BJ (cell line): ENCODE measurements at regions of chr16 and their contacts with region 1.

Region 1: DNA sequence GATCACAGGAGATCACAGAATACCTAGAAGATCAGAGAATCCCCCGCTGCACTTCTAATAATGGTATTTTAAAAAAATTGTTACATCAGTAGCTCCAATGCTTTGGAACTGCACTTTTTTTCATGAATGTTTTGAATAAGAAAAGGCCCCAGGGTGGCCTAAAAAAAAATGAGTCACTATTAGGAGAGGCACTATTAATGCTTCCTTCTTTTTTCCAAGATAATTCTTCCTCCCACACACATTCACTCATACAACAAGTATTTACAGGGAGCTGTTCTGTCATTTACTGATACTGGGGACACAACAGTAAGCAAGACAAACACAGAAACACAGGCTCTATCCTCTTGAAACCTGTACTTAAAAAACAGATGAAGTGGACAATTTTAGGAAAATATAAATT is 675 bp upstream of the PDZD9 start:
- DNase-seq: peak; percentile 72
- H3K4me3 ChIP-seq: no peak overlapping the region
- H3K27me3 ChIP-seq: no peaks in the 10 kb centered on the region
- CTCF ChIP-seq: no peak

Region 2: GRCh38 chr16:21937336-21937829 is 64.2 kb before region 1 on chr16:
- CTCF ChIA-PET with region 1: no interaction called
- POLR2A ChIA-PET with region 1: no interaction called
- DNase-seq: no peak
- H3K4me3 ChIP-seq: no peak overlapping the region
- H3K27me3 ChIP-seq: peaks cover 3% of the 10 kb centered on the region
- CTCF ChIP-seq: no peak

Region 3: GRCh38 chr16:21989133-21989532 is 12.5 kb before region 1 on chr16:
- CTCF ChIA-PET with region 1: interaction called, 14 read pairs
- POLR2A ChIA-PET with region 1: no interaction called
- DNase-seq: peak; percentile 19
- H3K4me3 ChIP-seq: no peak overlapping the region
- H3K27me3 ChIP-seq: no peaks in the 10 kb centered on the region
- CTCF ChIP-seq: no peak

Region 4: DNA sequence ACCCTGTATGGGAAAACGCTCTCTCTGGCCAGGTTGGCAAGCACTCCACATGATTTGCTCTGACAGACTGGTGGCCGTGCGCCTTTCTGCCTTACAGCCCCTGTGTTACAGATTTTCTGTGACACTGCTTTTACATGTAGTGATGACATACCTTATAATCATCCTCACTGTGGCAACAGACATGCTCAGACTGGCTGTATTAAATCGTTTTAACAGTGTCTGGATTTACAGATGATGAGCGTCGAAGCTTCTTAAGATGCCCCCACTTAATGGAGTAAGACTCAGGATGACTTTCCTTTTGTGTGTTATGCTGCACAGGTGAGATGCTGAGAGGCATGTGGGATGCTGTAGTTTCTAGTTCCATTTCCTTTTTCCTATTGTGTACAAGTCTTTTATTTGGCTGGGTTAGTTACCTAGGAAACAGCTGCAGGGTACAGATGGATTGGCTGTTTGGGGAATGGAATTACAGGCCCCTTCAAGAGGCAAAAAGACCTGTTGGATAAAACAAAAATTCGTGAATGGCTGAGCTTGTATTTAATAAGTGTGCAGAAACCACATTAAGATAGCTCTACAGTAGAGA is 69.8 kb after region 1 on chr16:
- CTCF ChIA-PET with region 1: interaction called, 90 read pairs
- POLR2A ChIA-PET with region 1: no interaction called
- DNase-seq: no peak
- H3K4me3 ChIP-seq: no peak overlapping the region
- H3K27me3 ChIP-seq: no peaks in the 10 kb centered on the region
- CTCF ChIP-seq: no peak

Region 5: DNA sequence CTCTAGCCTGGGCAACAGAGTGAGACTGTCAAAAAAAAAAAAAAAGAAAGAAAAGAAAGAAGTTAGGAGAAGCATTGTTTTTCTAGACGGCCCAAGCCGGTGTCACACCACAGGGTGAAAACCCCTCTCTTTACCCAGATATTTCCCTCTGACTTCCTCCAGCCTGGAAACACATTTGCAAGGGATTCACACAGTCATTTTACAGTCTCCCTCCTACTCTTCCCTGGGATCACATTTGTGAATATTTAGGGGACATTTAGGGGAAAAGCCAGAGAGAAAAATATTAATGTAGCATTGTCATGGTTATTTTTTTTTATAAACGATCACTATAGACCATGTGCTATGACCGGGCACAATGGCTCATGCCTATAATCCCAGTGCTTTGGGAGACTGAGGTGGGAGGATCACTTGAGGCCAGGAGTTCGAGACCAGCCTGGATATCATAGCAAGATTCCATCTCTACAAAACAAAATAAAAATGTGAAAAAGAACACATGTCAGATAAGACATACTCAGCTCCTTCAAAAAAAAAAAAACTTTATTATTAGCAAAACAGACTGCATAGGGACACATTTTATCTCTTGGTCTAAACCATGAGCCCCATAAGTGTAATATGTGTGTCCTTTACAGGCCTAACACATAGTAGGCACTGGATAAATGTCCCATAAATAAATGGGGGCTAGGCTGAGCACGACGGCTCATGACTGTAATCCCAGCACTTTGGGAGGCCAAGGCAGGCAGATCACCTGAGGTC is 149.8 kb after region 1 on chr16:
- CTCF ChIA-PET with region 1: no interaction called
- POLR2A ChIA-PET with region 1: no interaction called
- DNase-seq: no peak
- H3K4me3 ChIP-seq: no peak overlapping the region
- H3K27me3 ChIP-seq: peaks cover 3% of the 10 kb centered on the region; the same call in 1 of the 2 replicates
- CTCF ChIP-seq: no peak